ENCODE measurements at regions of chr13 and their contacts with region 1.

Region 1: GRCh38 chr13:69857183-69857821 is 250.3 kb upstream of the ATXN8OS start:
- DNase-seq: peak; percentile 52
- ATAC-seq: peak; percentile 82
- H3K4me3 ChIP-seq: no peak overlapping the region
- H3K27ac ChIP-seq: no peak overlapping the region
- H3K4me1 ChIP-seq: no peaks in the 10 kb centered on the region
- H3K27me3 ChIP-seq: no peaks in the 10 kb centered on the region
- CTCF ChIP-seq: peak; percentile 69
- EP300 ChIP-seq: no peak
- POLR2A ChIP-seq: no peak
- RAD21 ChIP-seq: no peak

Region 2: DNA sequence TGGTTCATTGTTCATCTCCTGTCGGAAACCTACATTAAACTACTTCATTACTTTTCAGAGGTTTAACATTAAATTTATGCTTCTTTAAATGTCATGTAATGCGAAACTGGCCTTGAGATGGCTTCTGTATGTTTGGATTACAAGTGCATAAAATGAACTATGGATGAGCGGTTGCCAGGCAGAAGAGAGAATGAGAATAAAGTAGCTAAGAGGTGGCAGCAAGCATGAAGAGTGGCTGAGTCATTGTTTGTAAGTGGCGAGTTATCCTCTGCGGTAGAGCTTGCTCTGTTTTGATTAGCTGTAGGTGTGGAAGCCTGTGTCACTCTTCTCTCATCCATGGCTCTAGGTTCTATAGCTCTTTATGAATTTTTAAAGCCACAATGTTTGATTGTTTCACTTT is 1487.6 kb before region 1 on chr13:
- CTCF ChIA-PET with region 1: no interaction called
- POLR2A ChIA-PET with region 1: no interaction called
- in situ Hi-C with region 1: no loop called
- intact Hi-C with region 1: no loop called
- DNase-seq: peak; percentile 49
- ATAC-seq: peak; percentile 96
- H3K4me3 ChIP-seq: no peak overlapping the region
- H3K27ac ChIP-seq: no peak overlapping the region
- H3K4me1 ChIP-seq: peaks cover 22% of the 10 kb centered on the region
- H3K27me3 ChIP-seq: no peaks in the 10 kb centered on the region
- CTCF ChIP-seq: no peak
- EP300 ChIP-seq: no peak
- POLR2A ChIP-seq: no peak
- RAD21 ChIP-seq: no peak

Region 3: GRCh38 chr13:69545551-69545950 is 311.8 kb before region 1 on chr13:
- CTCF ChIA-PET with region 1: interaction called, 5 read pairs
- POLR2A ChIA-PET with region 1: no interaction called
- in situ Hi-C with region 1: loop called (anchors 10 kb)
- intact Hi-C with region 1: no loop called
- DNase-seq: no peak
- ATAC-seq: no peak
- H3K4me3 ChIP-seq: no peak overlapping the region
- H3K27ac ChIP-seq: no peak overlapping the region
- H3K4me1 ChIP-seq: no peaks in the 10 kb centered on the region
- H3K27me3 ChIP-seq: no peaks in the 10 kb centered on the region
- CTCF ChIP-seq: no peak
- EP300 ChIP-seq: no peak
- POLR2A ChIP-seq: no peak
- RAD21 ChIP-seq: no peak

Region 4: DNA sequence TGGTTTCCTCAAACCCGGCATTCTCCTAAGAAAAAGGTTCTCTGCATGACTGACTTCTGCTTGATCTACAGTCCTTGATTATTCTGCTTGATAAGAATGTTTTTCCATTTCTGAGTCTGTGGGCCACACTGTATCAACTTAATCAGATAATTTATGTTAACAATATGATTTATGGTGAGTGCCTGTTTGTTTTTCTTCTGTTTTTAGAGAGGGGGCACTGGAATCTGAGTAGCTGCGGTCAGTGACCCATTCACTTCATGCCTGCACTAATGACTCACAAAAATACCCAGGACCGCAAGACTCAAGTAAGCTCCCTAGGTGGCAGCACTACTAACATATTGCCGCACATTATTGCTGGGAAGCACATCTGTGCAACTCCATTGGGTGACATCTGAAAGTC is 292.0 kb before region 1 on chr13:
- CTCF ChIA-PET with region 1: interaction called, 3 read pairs
- POLR2A ChIA-PET with region 1: no interaction called
- in situ Hi-C with region 1: no loop called
- intact Hi-C with region 1: loop called (anchors 1 kb)
- DNase-seq: peak; percentile 52
- ATAC-seq: peak; percentile 97
- H3K4me3 ChIP-seq: no peak overlapping the region
- H3K27ac ChIP-seq: no peak overlapping the region
- H3K4me1 ChIP-seq: no peaks in the 10 kb centered on the region
- H3K27me3 ChIP-seq: no peaks in the 10 kb centered on the region
- CTCF ChIP-seq: peak; percentile 58
- EP300 ChIP-seq: no peak
- POLR2A ChIP-seq: no peak
- RAD21 ChIP-seq: no peak